Tibial artery (tissue), 4 donors: ENCODE measurements at regions of chr4 and their contacts with region 1.

Region 1: GRCh38 chr4:88021824-88022223 is 14.4 kb downstream of the PKD2 start:
- DNase-seq: no peak
- H3K4me3 ChIP-seq: no peak overlapping the region
- H3K27ac ChIP-seq: peak overlapping the region; percentile 16 to 96
- H3K4me1 ChIP-seq: peaks cover 0 to 78% (median 20%) of the 10 kb centered on the region in 4 donors
- H3K27me3 ChIP-seq: no peaks in the 10 kb centered on the region
- CTCF ChIP-seq: no peak

Region 2: DNA sequence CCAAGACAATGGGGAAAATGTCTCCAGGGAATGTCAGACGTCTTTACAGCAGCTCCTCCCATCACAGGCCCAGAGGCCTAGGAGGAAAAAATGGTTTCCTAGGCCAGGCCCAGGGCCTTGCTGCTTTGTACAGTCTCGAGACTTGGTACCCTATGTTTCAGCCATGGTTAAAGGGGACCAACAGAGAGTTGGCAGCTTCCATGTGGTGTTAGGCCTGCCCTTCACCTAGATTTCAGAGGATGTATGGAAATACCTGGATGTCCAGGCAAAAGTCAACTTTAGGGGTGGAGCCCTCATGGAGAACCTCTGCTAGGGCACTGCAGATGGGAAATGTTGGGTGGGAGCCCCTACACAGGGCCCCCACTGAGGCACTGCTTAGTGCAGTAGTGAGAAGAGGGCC is 98.1 kb after region 1 on chr4:
- intact Hi-C with region 1: no loop called
- DNase-seq: no peak
- H3K4me3 ChIP-seq: no peak overlapping the region
- H3K27ac ChIP-seq: no peak overlapping the region
- H3K4me1 ChIP-seq: no peaks in the 10 kb centered on the region
- H3K27me3 ChIP-seq: no peaks in the 10 kb centered on the region
- CTCF ChIP-seq: no peak

Region 3: GRCh38 chr4:88284439-88285234 is 262.8 kb after region 1 on chr4 and contains the start of gene PPM1K:
- intact Hi-C with region 1: loop called (anchors 5 kb)
- DNase-seq: peak; percentile 99 to 100
- H3K4me3 ChIP-seq: peak within 1 kb of the TSS; percentile 72 to 88
- H3K27ac ChIP-seq: peak within 1 kb of the TSS; percentile 98 to 99
- H3K4me1 ChIP-seq: peaks cover 0 to 68% (median 31%) of the 10 kb centered on the region in 4 donors
- H3K27me3 ChIP-seq: no peaks in the 10 kb centered on the region
- CTCF ChIP-seq: peak in 1 of 2 experiments; percentile 36